ENCODE measurements at regions of chr19 and their contacts with region 1.

Region 1: DNA sequence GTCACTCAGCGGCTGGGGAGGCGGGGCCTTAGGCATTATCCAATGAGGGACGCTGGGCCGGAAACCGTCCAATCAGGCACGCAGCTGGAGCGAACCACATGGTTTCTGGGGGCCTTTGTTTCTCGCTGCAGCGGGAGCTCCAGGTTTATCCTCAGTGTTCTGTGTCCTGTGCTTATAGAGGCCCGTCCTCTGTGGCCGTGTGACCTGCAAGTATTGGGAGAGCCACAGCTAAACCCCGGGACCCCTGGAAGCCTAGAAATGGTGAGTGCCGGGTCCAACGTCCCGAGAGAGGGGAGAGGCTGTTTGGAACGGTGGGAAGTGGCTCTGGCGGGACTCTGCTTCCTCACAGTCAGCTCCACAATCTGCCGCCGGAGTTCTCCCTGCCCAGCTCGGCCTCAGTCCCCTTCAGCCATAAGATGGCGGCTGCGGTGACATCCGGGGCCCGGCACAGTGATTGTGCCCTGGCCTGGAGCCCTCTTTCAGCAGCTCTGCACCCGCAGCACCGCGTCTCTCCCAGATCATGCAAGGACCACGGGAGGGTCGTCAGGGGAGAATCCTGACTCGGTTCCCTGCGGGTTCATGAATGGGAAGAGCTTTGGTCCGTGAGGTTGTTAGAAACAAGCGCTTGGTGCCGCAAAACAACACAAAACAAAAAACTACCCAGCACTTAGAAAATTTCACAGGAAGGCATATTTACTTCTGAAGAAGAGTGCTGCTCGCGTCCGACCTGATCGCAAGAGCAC is at the start of gene ZNF253:
- DNase-seq: peak; percentile 95
- ATAC-seq: peak; percentile 97
- H3K4me3 ChIP-seq: peak within 1 kb of the TSS; percentile 80 to 91 (median 90)
- H3K27ac ChIP-seq: peak within 1 kb of the TSS; percentile 99
- H3K4me1 ChIP-seq: peaks cover 35% of the 10 kb centered on the region
- H3K27me3 ChIP-seq: no peaks in the 10 kb centered on the region; a peak in 1 of 5 replicates
- CTCF ChIP-seq: no peak
- EP300 ChIP-seq: no peak
- POLR2A ChIP-seq: peak; percentile 96 to 98
- RAD21 ChIP-seq: no peak; the same call in 1 of the 2 replicates
- total RNA-seq, gene ZNF253: 10.6 and 12.8 TPM in 2 replicates

Region 2: DNA sequence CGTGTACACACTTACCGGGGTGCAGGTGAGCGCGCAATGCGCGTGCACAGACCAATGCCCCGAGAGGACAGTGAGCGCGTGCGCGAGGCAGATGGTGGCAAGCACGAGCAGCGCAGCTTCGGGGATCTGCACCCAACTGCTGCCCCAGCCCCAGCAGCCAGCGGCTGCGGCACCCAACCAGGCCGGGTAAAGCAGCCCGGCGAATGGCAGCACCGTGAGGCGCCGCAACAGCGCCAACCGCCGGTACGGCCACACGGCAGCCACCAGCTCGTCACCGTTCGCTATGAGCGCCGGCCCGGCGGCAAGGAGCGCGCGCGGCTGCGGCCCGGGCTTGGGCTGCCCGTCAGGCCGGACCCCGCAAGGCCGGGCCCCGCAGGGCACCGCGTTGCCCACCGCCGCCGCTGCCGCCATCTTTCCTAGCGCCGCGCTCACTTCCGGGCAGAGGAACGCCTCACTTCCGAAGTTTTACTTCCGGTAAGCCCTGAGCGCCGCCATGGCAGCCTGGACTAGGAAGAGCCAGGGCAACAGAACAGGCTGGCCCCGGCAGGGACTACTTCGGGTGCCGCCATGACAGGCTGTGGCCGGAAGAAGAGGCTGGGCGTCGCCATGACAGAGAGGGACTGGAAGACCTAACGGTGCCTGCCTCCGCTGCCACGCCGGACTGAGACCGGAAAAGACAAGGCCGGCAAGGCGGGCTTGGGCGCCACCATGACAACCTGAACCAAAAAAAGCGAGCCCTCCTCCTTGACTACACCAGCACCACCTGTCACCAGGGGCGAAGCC is 202.5 kb before region 1 on chr19 and contains the start of gene ATP13A1:
- CTCF ChIA-PET with region 1: no interaction called
- POLR2A ChIA-PET with region 1: interaction called, 18 read pairs
- in situ Hi-C with region 1: no loop called
- intact Hi-C with region 1: loop called (anchors 2 kb)
- DNase-seq: peak; percentile 95
- ATAC-seq: peak; percentile 87
- H3K4me3 ChIP-seq: peak within 1 kb of the TSS; percentile 79 to 99 (median 95)
- H3K27ac ChIP-seq: peak within 1 kb of the TSS; percentile 97
- H3K4me1 ChIP-seq: peaks cover 56% of the 10 kb centered on the region
- H3K27me3 ChIP-seq: no peaks in the 10 kb centered on the region; a peak in 1 of 5 replicates
- CTCF ChIP-seq: 0 out of 2 replicates have a peak, but pooled peaks have one; percentile 13
- EP300 ChIP-seq: no peak; a peak in 1 of 4 replicates
- POLR2A ChIP-seq: peak; percentile 73 to 84
- RAD21 ChIP-seq: peak; percentile 55
- total RNA-seq, gene ATP13A1: 9.8 and 23.2 TPM in 2 replicates

Region 3: GRCh38 chr19:19732579-19733501 is 133.1 kb before region 1 on chr19 and contains the start of gene ZNF14:
- CTCF ChIA-PET with region 1: no interaction called
- POLR2A ChIA-PET with region 1: interaction called, 11 read pairs
- in situ Hi-C with region 1: no loop called
- intact Hi-C with region 1: no loop called
- DNase-seq: peak; percentile 91
- ATAC-seq: peak; percentile 99
- H3K4me3 ChIP-seq: peak within 1 kb of the TSS; percentile 75 to 90 (median 80)
- H3K27ac ChIP-seq: peak within 1 kb of the TSS; percentile 72
- H3K4me1 ChIP-seq: peaks cover 10% of the 10 kb centered on the region
- H3K27me3 ChIP-seq: no peaks in the 10 kb centered on the region; a peak in 1 of 5 replicates
- CTCF ChIP-seq: peak; percentile 33
- EP300 ChIP-seq: no peak
- POLR2A ChIP-seq: peak; percentile 84 to 98
- RAD21 ChIP-seq: no peak
- total RNA-seq, gene ZNF14: 6.2 and 8.8 TPM in 2 replicates

Region 4: GRCh38 chr19:20051841-20052768 is 186.2 kb after region 1 on chr19:
- CTCF ChIA-PET with region 1: no interaction called
- POLR2A ChIA-PET with region 1: interaction called, 13 read pairs
- in situ Hi-C with region 1: no loop called
- intact Hi-C with region 1: no loop called
- DNase-seq: peak; percentile 92
- ATAC-seq: peak; percentile 99
- H3K4me3 ChIP-seq: peak overlapping the region; percentile 61 to 78 (median 70)
- H3K27ac ChIP-seq: peak overlapping the region; percentile 47
- H3K4me1 ChIP-seq: no peaks in the 10 kb centered on the region
- H3K27me3 ChIP-seq: no peaks in the 10 kb centered on the region
- CTCF ChIP-seq: no peak
- EP300 ChIP-seq: no peak
- POLR2A ChIP-seq: peak; percentile 50 to 55
- RAD21 ChIP-seq: no peak

Measured in HepG2 (cell line).